ENCODE measurements at regions of chr6 and their contacts with region 1.

Region 1: GRCh38 chr6:57316581-57317059 is 810 bp upstream of the PRIM2 start:
- DNase-seq: peak; percentile 59 to 87 (median 79)
- H3K4me3 ChIP-seq: peak overlapping the region; percentile 98
- H3K4me3 Mint-ChIP-seq: peak overlapping the region; percentile 91 to 99 (median 98)
- H3K27ac ChIP-seq: peak overlapping the region; percentile 74
- H3K27ac Mint-ChIP-seq: peak overlapping the region; percentile 75 to 98 (median 96)
- H3K4me1 ChIP-seq: peaks cover 11% of the 10 kb centered on the region
- H3K4me1 Mint-ChIP-seq: peaks cover 34 to 40% (median 36%) of the 10 kb centered on the region in 3 donors
- H3K27me3 ChIP-seq: no peaks in the 10 kb centered on the region
- H3K27me3 Mint-ChIP-seq: peaks cover 2 to 6% of the 10 kb centered on the region in 2 donors

Region 2: DNA sequence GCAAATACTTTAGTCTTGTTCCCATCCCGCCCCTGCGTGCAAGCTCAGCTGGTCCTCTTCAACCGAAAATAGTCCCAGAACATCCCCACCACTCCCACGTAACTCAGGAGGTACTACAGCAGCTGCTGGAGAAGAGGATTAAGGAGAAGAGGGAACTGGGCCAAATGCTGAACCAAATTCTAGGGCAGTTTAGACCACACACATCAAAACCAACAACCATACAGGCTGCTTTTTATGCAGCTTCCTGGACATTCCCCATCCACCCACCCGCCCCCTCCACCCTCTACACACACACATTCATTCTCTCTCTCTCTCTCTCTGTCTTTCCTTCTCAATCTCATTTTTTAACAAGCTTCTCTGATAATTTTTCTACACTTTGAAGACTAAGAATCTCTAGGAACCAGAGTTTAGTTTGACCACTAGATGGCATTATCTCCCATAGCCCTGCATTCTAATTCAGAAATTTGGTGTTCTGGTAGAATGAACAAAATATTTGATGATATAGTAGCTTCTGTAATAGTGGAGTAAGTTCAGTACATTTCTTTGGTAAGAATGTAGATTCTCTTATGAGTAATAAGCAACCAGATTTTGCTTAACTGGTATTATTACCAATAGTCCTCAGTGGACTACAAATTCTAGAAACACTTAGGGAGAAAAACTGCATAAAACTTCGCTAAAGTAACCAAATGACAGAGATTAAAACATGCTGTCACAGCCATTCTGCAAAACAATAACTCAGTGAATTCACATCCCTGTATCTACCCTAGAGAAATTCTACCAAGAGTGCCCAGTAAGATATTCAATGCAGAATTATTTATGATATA is 413.8 kb before region 1 on chr6:
- CTCF ChIA-PET with region 1: interaction called, 101 read pairs
- POLR2A ChIA-PET with region 1: interaction called, 3 read pairs
- DNase-seq: peak in 2 of 5 donors; percentile 17 to 35
- H3K4me3 ChIP-seq: no peak overlapping the region
- H3K4me3 Mint-ChIP-seq: no peak overlapping the region
- H3K27ac ChIP-seq: no peak overlapping the region
- H3K27ac Mint-ChIP-seq: no peak overlapping the region
- H3K4me1 ChIP-seq: no peaks in the 10 kb centered on the region
- H3K4me1 Mint-ChIP-seq: no peaks in the 10 kb centered on the region
- H3K27me3 ChIP-seq: no peaks in the 10 kb centered on the region
- H3K27me3 Mint-ChIP-seq: peaks cover 3 to 14% of the 10 kb centered on the region in 2 donors

Region 3: GRCh38 chr6:57252975-57253374 is 63.6 kb before region 1 on chr6:
- CTCF ChIA-PET with region 1: no interaction called
- POLR2A ChIA-PET with region 1: no interaction called
- DNase-seq: no peak
- H3K4me3 ChIP-seq: no peak overlapping the region
- H3K4me3 Mint-ChIP-seq: no peak overlapping the region
- H3K27ac ChIP-seq: no peak overlapping the region
- H3K27ac Mint-ChIP-seq: no peak overlapping the region
- H3K4me1 ChIP-seq: no peaks in the 10 kb centered on the region
- H3K4me1 Mint-ChIP-seq: no peaks in the 10 kb centered on the region
- H3K27me3 ChIP-seq: no peaks in the 10 kb centered on the region
- H3K27me3 Mint-ChIP-seq: peaks cover 0 to 2% of the 10 kb centered on the region in 2 donors

Region 4: GRCh38 chr6:57267586-57268293 is 48.9 kb before region 1 on chr6:
- CTCF ChIA-PET with region 1: interaction called, 17 read pairs
- POLR2A ChIA-PET with region 1: no interaction called
- DNase-seq: peak in 4 of 5 donors; percentile 9 to 36 (median 16)
- H3K4me3 ChIP-seq: no peak overlapping the region
- H3K4me3 Mint-ChIP-seq: no peak overlapping the region
- H3K27ac ChIP-seq: no peak overlapping the region
- H3K27ac Mint-ChIP-seq: no peak overlapping the region
- H3K4me1 ChIP-seq: no peaks in the 10 kb centered on the region
- H3K4me1 Mint-ChIP-seq: no peaks in the 10 kb centered on the region
- H3K27me3 ChIP-seq: no peaks in the 10 kb centered on the region
- H3K27me3 Mint-ChIP-seq: peaks cover 4 to 12% of the 10 kb centered on the region in 2 donors

Measured in CD8-positive, alpha-beta memory T cell (primary cell).